ENCODE measurements at regions of chr2 and their contacts with region 1.

Region 1: DNA sequence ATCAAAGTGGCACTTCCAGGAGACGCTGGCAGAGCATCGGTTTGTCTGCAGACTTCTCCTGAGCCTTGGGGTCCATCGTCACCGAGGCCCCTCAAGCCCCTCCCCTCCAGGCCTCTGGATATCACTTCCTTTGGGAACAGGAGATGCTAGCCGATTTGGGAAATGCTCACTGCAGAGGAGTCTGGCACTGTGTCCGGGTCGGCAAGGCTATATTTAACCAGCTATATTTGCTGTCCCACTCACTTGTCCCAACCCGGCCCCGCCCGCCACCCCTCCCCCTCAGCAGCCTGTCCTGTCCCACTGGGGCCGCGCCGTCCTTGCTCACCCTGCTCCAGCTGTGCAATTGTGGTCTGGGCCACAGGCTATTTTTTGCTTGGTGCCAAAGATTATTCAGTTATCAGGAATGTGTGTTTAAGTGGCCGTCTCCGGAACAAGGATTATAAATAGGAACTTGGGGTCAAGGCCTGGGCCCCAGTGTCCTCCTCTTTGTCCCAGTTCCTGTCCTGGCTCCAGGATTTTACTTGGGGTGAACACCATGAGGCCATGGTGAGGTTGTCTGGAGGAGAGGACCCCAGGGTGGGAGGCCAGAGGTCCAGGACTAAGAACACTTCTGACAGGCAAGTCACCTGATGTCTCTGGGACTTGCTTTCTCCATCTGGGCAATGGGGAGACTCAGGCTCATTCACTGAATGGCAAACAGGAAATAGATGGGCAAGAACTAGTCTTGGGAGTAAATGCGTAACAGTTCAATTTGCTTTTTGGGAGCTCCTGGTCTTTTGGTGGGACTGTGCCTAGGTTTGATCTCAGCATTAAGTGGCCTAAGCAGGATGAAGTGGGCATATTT is 263.6 kb downstream of the DYSF start:
- DNase-seq: peak; percentile 97 to 99
- ATAC-seq: peak; percentile 83 to 85
- H3K4me3 ChIP-seq: no peak overlapping the region
- H3K27ac ChIP-seq: peak overlapping the region; percentile 82 to 90 (median 86)
- H3K4me1 ChIP-seq: peaks cover 85 to 86% of the 10 kb centered on the region in 2 donors
- H3K27me3 ChIP-seq: no peaks in the 10 kb centered on the region
- CTCF ChIP-seq: no peak
- POLR2A ChIP-seq: no peak

Region 2: GRCh38 chr2:71306762-71307161 is 410.2 kb before region 1 on chr2:
- in situ Hi-C with region 1: no loop called
- intact Hi-C with region 1: no loop called
- DNase-seq: peak in 1 of 2 donors; percentile 19
- ATAC-seq: peak in 1 of 2 donors; percentile 72
- H3K4me3 ChIP-seq: no peak overlapping the region
- H3K27ac ChIP-seq: peak overlapping the region in 3 of 4 donors; percentile 7 to 54 (median 36)
- H3K4me1 ChIP-seq: peaks cover 8 to 16% of the 10 kb centered on the region in 2 donors
- H3K27me3 ChIP-seq: no peaks in the 10 kb centered on the region
- CTCF ChIP-seq: no peak
- POLR2A ChIP-seq: no peak

Region 3: DNA sequence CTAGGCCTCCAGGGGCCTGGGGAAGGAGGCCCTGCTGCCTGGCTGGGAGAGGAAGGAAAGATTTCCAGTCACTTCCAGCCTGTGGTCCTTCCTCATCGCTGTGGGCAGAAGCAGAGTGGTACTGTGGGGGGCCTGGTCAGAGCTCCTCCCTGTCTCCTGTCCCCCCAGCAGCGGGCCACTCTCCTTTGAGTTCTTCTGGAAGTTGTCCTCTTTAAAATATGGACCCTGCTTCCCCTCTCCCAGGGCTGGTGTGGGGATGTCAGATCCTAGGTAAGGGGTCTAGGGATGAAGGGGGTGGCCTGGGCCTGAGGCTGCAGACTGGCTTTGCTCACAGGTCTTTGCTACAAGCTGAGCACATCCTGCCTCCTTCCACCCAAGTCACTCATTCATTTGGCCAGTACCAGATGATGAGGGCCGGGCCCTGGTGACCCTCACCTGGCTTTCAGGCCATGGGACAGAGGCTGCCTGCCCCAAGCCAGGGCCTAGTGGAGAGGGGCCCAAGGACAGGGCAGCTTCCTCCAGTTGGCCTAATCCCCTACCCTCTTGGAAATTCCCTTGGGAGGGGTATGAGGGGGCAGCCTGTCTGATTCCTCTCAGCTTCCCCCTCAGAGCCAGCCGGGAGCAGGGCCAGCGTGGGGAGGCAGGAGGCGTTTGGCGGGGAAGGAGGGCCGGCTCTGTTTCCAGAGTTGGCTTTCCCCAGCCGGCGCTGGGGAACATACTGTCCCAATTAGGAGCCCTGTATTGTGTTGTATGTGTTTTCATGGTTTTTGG is 31.7 kb before region 1 on chr2:
- in situ Hi-C with region 1: no loop called
- intact Hi-C with region 1: loop called (anchors 2 kb)
- DNase-seq: peak; percentile 78 to 89
- ATAC-seq: peak; percentile 68 to 79
- H3K4me3 ChIP-seq: no peak overlapping the region
- H3K27ac ChIP-seq: peak overlapping the region; percentile 86 to 92 (median 89)
- H3K4me1 ChIP-seq: peaks cover 34 to 56% of the 10 kb centered on the region in 2 donors
- H3K27me3 ChIP-seq: no peaks in the 10 kb centered on the region
- CTCF ChIP-seq: no peak
- POLR2A ChIP-seq: peak in 1 of 2 donors; percentile 32

Region 4: GRCh38 chr2:71691747-71692501 is 25.1 kb before region 1 on chr2:
- in situ Hi-C with region 1: no loop called
- intact Hi-C with region 1: loop called (anchors 1 kb)
- DNase-seq: peak; percentile 85 to 88
- ATAC-seq: peak; percentile 83 to 89
- H3K4me3 ChIP-seq: peak overlapping the region in 1 of 4 donors; percentile 13
- H3K27ac ChIP-seq: peak overlapping the region; percentile 85 to 92 (median 90)
- H3K4me1 ChIP-seq: peaks cover 27 to 46% of the 10 kb centered on the region in 2 donors
- H3K27me3 ChIP-seq: no peaks in the 10 kb centered on the region
- CTCF ChIP-seq: peak in 4 of 5 experiments; percentile 25 to 38 (median 28)
- POLR2A ChIP-seq: peak; percentile 54 to 64

Measured in gastrocnemius medialis (tissue), 4 donors.